ENCODE measurements at regions of chr5 and their contacts with region 1.

Region 1: GRCh38 chr5:95543017-95543705 is 11.6 kb downstream of the SKIC3 start:
- DNase-seq: no peak
- H3K4me3 ChIP-seq: no peak overlapping the region
- H3K27ac ChIP-seq: no peak overlapping the region
- H3K4me1 ChIP-seq: no peaks in the 10 kb centered on the region
- H3K27me3 ChIP-seq: no peaks in the 10 kb centered on the region
- CTCF ChIP-seq: no peak
- POLR2A ChIP-seq: no peak

Region 2: DNA sequence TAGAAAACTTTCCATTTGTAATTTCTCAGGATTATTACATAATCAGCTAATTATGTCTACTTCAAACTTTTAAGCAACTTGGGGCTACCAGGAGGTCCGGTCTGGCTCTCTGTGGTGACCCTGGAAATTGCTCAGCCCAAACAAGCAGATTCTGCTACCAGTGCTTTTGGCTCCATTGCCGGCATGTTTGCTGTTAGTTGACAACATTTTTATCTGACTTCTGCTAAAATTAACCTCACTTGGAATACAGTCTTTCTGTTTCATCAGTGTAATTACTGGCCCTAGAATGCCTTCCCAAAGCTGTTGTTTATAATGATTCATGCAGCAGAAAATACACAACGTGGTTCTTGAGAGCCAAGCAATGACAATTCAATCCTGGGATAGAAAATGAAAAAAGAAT is 190.5 kb before region 1 on chr5:
- intact Hi-C with region 1: loop called (anchors 5 kb)
- DNase-seq: no peak
- H3K4me3 ChIP-seq: no peak overlapping the region
- H3K27ac ChIP-seq: no peak overlapping the region
- H3K4me1 ChIP-seq: no peaks in the 10 kb centered on the region
- H3K27me3 ChIP-seq: no peaks in the 10 kb centered on the region
- CTCF ChIP-seq: no peak
- POLR2A ChIP-seq: no peak

Region 3: GRCh38 chr5:95760273-95761191 is 217.4 kb after region 1 on chr5:
- intact Hi-C with region 1: no loop called
- DNase-seq: no peak
- H3K4me3 ChIP-seq: peak overlapping the region in 2 of 3 donors; percentile 4 to 7
- H3K27ac ChIP-seq: peak overlapping the region; percentile 19 to 26
- H3K4me1 ChIP-seq: no peaks in the 10 kb centered on the region
- H3K27me3 ChIP-seq: no peaks in the 10 kb centered on the region
- CTCF ChIP-seq: no peak
- POLR2A ChIP-seq: no peak

Measured in breast epithelium (tissue), 4 donors.